Right cardiac atrium (tissue), 5 donors: ENCODE measurements at regions of chr5 and their contacts with region 1.

Region 1: DNA sequence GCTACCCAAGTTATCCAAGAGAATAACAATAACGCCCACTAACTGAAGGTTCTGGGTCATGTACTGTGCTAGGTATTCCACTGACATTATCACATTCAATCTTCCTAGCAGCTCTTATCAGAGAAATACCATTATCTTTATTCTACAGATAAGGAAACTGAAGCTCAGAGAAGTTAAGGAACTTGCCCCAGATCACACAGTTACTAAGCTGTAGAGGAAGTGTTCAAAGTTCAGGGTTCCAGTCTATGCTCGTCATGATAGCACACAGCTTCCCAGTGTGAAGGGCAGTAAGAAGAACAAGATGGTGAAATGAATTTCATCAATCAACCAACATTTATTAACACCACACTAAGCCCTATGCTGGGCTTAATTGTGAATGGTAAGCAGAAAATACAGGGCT is 29.6 kb downstream of the ELOVL7 start:
- DNase-seq: no peak
- ATAC-seq: no peak
- H3K4me3 ChIP-seq: no peak overlapping the region
- H3K27ac ChIP-seq: no peak overlapping the region
- H3K4me1 ChIP-seq: no peaks in the 10 kb centered on the region
- H3K27me3 ChIP-seq: no peaks in the 10 kb centered on the region

Region 2: DNA sequence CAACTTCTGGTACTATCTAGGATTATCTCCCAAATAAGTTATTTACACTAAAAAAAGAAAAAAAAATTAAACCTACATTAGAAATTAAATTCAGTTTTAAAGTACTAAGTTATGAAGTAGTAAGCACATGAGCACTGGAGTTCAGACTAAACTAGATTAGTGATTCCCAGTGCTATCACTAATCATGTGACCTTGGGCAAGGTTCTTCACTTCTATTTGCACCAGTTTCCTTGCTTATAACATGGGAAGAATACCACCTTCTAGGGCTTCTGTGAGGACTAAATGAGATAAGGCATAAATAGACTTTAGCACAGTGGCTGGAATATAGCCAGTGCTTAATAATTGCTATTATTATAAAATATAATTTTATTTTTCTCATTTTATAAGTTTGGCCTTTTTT is 19.0 kb after region 1 on chr5:
- intact Hi-C with region 1: loop called in 1 of 4 experiments (anchors 2 kb)
- DNase-seq: no peak
- ATAC-seq: no peak
- H3K4me3 ChIP-seq: no peak overlapping the region
- H3K27ac ChIP-seq: no peak overlapping the region
- H3K4me1 ChIP-seq: no peaks in the 10 kb centered on the region
- H3K27me3 ChIP-seq: no peaks in the 10 kb centered on the region

Region 3: DNA sequence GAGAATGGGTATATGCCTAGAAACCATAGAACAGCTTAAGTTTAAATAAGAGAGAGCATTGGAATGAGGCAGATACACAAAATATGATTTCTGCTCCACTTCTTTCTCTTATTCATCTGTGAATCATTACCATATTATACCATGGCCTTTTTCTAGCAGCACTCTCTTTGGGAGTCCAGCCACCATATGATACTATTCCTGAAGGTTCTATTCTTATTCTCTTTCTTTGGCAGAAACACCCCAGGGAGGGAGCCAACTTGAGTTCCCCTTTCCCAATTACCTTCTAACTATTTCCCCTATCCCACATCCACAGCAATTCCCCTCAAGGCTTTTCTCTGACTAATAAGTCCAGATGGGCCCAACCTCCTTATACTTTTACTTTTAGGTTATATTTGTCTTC is 186.4 kb after region 1 on chr5:
- intact Hi-C with region 1: no loop called
- DNase-seq: no peak
- ATAC-seq: no peak
- H3K4me3 ChIP-seq: no peak overlapping the region
- H3K27ac ChIP-seq: no peak overlapping the region
- H3K4me1 ChIP-seq: no peaks in the 10 kb centered on the region
- H3K27me3 ChIP-seq: no peaks in the 10 kb centered on the region